ENCODE measurements at regions of chr19 and their contacts with region 1.

Region 1: DNA sequence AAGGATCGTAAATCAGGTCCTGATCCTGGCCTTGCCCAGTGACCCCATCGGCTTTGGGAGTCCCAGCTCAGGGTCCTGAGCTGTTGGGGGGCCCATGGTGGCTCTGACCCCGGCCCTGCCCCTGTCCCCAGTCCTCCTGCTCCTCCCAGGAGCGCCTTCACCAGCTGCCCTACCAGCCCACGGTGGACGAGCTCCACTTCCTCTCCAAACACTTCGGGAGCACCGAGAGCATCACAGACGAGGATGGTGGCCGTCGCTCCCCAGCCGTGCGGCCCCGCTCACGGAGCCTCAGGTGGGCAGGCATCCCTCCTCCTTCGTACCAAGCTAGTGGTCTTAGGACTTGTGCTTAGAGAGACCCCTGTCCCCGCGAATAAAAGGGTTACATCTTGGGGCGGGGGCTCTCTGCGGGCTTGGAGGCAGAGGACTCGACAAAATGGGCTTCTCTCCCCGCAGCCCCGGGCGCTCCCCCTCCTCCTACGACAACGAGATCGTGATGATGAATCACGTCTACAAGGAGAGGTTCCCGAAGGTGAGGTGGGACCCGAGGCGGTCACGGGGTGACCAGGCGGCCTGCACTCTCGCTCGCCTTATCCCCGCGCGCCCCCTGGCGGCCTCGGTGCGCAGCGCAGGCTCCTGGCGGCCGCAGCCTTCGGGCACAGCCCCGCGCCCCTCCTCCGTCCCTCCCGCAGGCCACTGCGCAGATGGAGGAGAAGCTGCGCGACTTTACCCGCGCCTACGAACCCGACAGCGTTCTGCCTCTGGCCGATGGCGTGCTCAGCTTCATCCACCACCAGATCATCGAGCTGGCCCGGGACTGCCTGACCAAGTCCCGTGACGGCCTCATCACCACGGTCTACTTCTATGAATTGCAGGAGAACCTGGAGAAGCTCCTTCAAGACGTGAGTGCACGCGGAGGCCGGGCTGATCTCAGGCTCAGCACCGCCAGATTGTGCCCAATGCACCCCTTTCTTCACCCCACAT is 9.1 kb downstream of the MAST1 start:
- DNase-seq: peak; percentile 70 to 80 (median 73)
- H3K4me3 ChIP-seq: no peak overlapping the region
- H3K4me3 Mint-ChIP-seq: peak overlapping the region in 3 of 8 donors; percentile 43 to 57 (median 57)
- H3K27ac ChIP-seq: no peak overlapping the region
- H3K27ac Mint-ChIP-seq: no peak overlapping the region
- H3K4me1 ChIP-seq: peaks cover 9% of the 10 kb centered on the region
- H3K4me1 Mint-ChIP-seq: peaks cover 0 to 4% (median 0%) of the 10 kb centered on the region in 4 donors
- H3K27me3 ChIP-seq: peaks cover 5% of the 10 kb centered on the region
- H3K27me3 Mint-ChIP-seq: peaks cover 17 to 19% of the 10 kb centered on the region in 2 donors

Region 2: GRCh38 chr19:12716861-12717260 is 130.6 kb before region 1 on chr19:
- CTCF ChIA-PET with region 1: interaction called, 12 read pairs
- POLR2A ChIA-PET with region 1: no interaction called
- intact Hi-C with region 1: loop called (anchors 1 kb)
- DNase-seq: peak; percentile 38 to 62 (median 54)
- H3K4me3 ChIP-seq: no peak overlapping the region
- H3K4me3 Mint-ChIP-seq: peak overlapping the region in 1 of 8 donors; percentile 23
- H3K27ac ChIP-seq: no peak overlapping the region
- H3K27ac Mint-ChIP-seq: peak overlapping the region in 3 of 7 donors; percentile 18 to 48 (median 23)
- H3K4me1 ChIP-seq: peaks cover 13% of the 10 kb centered on the region
- H3K4me1 Mint-ChIP-seq: peaks cover 12 to 30% (median 17%) of the 10 kb centered on the region in 4 donors
- H3K27me3 ChIP-seq: no peaks in the 10 kb centered on the region
- H3K27me3 Mint-ChIP-seq: no peaks in the 10 kb centered on the region

Region 3: DNA sequence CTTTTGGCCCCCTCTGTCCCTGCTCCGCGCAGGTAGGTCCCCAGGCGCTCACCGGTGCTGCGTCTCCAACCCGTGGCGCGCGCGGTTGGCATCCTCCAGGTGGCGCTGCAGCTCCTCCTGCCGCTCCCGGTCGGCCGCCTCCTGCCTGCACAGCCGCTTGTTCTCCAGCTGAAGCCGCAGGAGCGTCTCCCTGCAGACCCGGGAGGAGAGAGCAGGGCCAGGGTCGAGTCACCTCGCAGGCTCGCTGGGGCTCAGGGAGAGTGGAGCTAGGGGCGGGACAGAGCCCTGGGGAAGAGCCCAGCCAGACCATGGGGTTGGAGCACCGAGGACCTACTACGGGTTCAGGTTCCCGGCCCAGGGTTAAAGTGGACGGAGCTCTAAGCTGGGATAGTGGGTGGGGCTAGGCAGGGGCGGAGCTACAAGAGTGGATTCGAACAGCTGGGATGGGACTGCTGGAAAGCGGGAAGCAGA is 81.4 kb before region 1 on chr19:
- CTCF ChIA-PET with region 1: interaction called, 200 read pairs
- POLR2A ChIA-PET with region 1: interaction called, 4 read pairs
- intact Hi-C with region 1: loop called (anchors 1 kb)
- DNase-seq: peak; percentile 63 to 83 (median 69)
- H3K4me3 ChIP-seq: no peak overlapping the region
- H3K4me3 Mint-ChIP-seq: peak overlapping the region in 1 of 8 donors; percentile 48
- H3K27ac ChIP-seq: no peak overlapping the region
- H3K27ac Mint-ChIP-seq: peak overlapping the region in 1 of 7 donors; percentile 42
- H3K4me1 ChIP-seq: no peaks in the 10 kb centered on the region
- H3K4me1 Mint-ChIP-seq: peaks cover 2 to 14% (median 6%) of the 10 kb centered on the region in 4 donors
- H3K27me3 ChIP-seq: no peaks in the 10 kb centered on the region
- H3K27me3 Mint-ChIP-seq: no peaks in the 10 kb centered on the region

Region 4: GRCh38 chr19:12785431-12786011 is 61.9 kb before region 1 on chr19:
- CTCF ChIA-PET with region 1: no interaction called
- POLR2A ChIA-PET with region 1: no interaction called
- intact Hi-C with region 1: no loop called
- DNase-seq: peak in 1 of 5 donors; percentile 24
- H3K4me3 ChIP-seq: no peak overlapping the region
- H3K4me3 Mint-ChIP-seq: no peak overlapping the region
- H3K27ac ChIP-seq: peak overlapping the region; percentile 99
- H3K27ac Mint-ChIP-seq: no peak overlapping the region
- H3K4me1 ChIP-seq: peaks cover 71% of the 10 kb centered on the region
- H3K4me1 Mint-ChIP-seq: peaks cover 16 to 36% (median 26%) of the 10 kb centered on the region in 4 donors
- H3K27me3 ChIP-seq: no peaks in the 10 kb centered on the region
- H3K27me3 Mint-ChIP-seq: no peaks in the 10 kb centered on the region

Region 5: GRCh38 chr19:12796146-12797071 is 51.0 kb before region 1 on chr19:
- CTCF ChIA-PET with region 1: interaction called, 26 read pairs
- POLR2A ChIA-PET with region 1: interaction called, 4 read pairs
- intact Hi-C with region 1: loop called (anchors 5 kb)
- DNase-seq: peak; percentile 79 to 84 (median 79)
- H3K4me3 ChIP-seq: peak overlapping the region in 1 of 2 donors; percentile 42
- H3K4me3 Mint-ChIP-seq: peak overlapping the region; percentile 59 to 89 (median 82)
- H3K27ac ChIP-seq: peak overlapping the region; percentile 42
- H3K27ac Mint-ChIP-seq: peak overlapping the region in 6 of 7 donors; percentile 95 to 99 (median 97)
- H3K4me1 ChIP-seq: peaks cover 42% of the 10 kb centered on the region
- H3K4me1 Mint-ChIP-seq: peaks cover 25 to 51% (median 34%) of the 10 kb centered on the region in 4 donors
- H3K27me3 ChIP-seq: no peaks in the 10 kb centered on the region
- H3K27me3 Mint-ChIP-seq: no peaks in the 10 kb centered on the region

Region 6: DNA sequence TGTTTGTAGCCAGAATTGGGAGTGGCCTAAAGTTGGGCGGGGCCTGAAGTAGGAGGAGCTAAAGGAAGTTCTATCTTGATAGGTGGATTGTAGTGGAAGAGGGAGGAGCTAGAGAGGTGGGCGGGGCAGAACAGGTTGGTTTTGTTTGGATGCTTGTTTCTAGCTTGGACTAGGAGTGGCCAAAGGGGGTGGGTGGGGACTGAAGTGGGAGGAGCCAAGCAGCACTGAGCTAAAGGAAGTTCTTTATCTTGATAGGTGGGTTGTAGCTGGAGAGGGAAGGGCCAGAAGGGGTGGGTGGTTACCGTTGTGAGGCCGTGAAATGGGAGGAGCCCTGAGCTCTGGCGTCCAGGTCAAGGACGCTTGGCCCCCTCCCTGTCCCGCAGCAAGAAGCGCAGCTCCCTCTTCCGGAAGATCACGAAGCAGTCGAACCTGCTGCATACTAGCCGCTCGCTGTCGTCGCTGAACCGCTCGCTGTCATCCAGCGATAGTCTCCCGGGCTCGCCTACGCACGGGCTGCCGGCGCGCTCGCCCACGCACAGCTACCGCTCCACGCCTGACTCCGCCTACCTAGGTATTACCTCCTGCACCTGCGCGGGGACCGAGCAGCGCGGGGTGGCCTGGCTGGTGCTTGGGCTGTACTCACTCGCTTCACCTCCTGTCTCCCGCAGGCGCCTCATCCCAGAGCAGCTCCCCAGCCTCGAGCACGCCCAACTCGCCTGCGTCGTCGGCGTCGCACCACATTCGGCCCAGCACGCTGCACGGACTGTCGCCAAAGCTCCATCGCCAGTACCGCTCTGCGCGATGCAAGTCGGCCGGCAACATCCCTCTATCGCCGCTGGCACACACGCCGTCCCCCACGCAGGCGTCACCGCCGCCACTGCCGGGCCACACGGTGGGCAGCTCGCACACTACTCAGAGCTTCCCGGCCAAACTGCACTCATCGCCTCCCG is 25.8 kb after region 1 on chr19:
- CTCF ChIA-PET with region 1: interaction called, 12 read pairs
- POLR2A ChIA-PET with region 1: no interaction called
- intact Hi-C with region 1: no loop called
- DNase-seq: peak; percentile 44 to 87 (median 58)
- H3K4me3 ChIP-seq: no peak overlapping the region
- H3K4me3 Mint-ChIP-seq: peak overlapping the region; percentile 34 to 76 (median 48)
- H3K27ac ChIP-seq: no peak overlapping the region
- H3K27ac Mint-ChIP-seq: peak overlapping the region in 6 of 7 donors; percentile 5 to 89 (median 64)
- H3K4me1 ChIP-seq: no peaks in the 10 kb centered on the region
- H3K4me1 Mint-ChIP-seq: peaks cover 2 to 14% (median 5%) of the 10 kb centered on the region in 4 donors
- H3K27me3 ChIP-seq: no peaks in the 10 kb centered on the region
- H3K27me3 Mint-ChIP-seq: peaks cover 0 to 1% of the 10 kb centered on the region in 2 donors

Measured in CD4-positive, alpha-beta memory T cell (primary cell).